Endothelial cell of umbilical vein (primary cell): ENCODE measurements at regions of chr11 and their contacts with region 1.

Region 1: DNA sequence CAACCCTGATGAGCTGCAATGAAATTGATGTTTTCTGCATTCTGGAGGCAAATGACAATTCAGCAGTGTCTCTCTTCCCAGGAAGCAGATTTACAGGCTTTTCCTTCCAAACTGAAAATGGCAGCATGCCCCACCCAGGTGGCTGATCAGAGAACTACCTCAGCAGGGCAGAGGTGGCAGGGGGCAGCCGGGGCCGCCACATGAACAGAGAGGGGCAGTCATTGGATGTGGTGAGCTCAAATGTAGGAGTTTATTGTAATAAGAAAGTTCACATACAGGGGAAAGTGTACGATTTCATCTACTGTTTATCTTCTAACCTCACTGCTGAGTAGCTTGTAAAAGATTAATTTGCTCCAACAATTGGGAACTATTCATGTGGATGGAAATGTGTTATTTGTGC is 15.7 kb upstream of the PARVA start:
- DNase-seq: no peak
- H3K4me3 ChIP-seq: no peak overlapping the region
- H3K27ac ChIP-seq: no peak overlapping the region
- H3K4me1 ChIP-seq: peaks cover 2% of the 10 kb centered on the region
- H3K27me3 ChIP-seq: peaks cover 14 to 23% of the 10 kb centered on the region in 2 experiments
- CTCF ChIP-seq: no peak
- POLR2A ChIP-seq: no peak

Region 2: GRCh38 chr11:12377824-12378593 is 16.3 kb after region 1 on chr11:
- CTCF ChIA-PET with region 1: interaction called, 10 read pairs
- POLR2A ChIA-PET with region 1: interaction called, 5 read pairs
- dilution Hi-C with region 1: no loop called
- intact Hi-C with region 1: no loop called
- DNase-seq: peak; percentile 69
- H3K4me3 ChIP-seq: peak overlapping the region; percentile 72 to 82 (median 78)
- H3K27ac ChIP-seq: peak overlapping the region; percentile 95
- H3K4me1 ChIP-seq: peaks cover 16% of the 10 kb centered on the region
- H3K27me3 ChIP-seq: no peaks in the 10 kb centered on the region
- CTCF ChIP-seq: peak; percentile 12 to 23
- POLR2A ChIP-seq: no peak